HEK293 (cell line): ENCODE measurements at regions of chr2 and their contacts with region 1.

Region 1: DNA sequence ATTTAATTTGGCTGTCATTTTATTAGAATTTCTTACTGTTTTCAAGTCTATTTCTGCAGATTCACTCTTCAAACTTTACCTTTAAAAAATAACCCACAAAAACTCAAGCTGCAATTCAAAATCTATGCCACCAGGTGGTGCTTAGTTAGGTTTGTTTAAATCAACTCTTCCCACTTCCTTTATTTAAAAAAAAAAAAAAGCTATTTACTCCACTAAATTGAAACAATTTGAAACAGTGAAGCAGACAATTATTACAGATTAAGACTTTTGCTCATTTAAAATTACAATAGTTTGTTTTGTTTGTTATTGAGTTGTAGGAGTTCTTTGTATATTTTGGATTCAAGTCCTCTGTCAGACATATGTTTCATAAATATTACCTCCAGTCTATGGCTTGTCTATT is 300.0 kb downstream of the PDE11A start:
- H3K4me3 ChIP-seq: no peak overlapping the region
- H3K27ac ChIP-seq: no peak overlapping the region
- H3K4me1 ChIP-seq: no peaks in the 10 kb centered on the region
- CTCF ChIP-seq: no peak

Region 2: DNA sequence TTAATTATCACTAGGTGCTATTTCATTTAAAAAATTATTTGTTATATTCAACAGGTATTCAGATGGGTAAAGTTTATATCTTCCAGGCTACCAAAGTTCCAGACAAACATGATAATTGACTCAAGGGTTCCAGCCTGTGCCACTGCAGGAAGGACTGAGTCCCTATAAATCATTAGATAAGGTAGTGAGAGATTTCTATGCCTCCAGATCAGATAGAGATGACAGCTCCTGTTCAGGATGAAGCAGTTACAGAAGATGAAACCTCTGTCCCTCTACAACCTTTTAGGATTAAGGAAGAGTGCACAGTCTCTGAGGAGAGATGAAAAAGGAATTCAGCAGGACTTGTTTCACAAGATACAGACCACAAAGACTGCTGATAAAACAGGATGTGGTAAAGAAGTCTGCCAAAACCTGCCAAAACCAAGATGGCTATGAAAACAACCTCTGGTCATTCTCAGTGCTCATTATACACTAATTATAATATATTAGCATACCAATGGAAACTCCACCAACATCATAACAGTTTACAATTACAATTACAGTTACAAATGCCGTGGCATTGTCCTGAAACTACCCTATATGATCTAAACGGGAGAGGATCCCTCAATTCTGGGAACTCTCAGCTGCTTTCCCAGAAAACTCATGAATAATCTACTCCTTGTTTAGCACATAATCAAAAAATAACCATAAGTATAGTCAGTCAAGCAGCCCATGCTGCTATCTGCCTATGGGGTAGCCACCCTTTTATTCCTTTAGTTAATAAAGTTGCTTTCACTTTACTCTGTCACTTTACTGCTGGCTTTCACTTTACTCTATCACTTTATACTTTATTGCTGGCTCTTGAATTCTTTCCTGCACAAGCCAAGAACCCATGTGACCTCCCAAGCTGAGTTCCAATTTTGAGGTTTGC is 11.6 kb after region 1 on chr2:
- CTCF ChIA-PET with region 1: interaction called, 10 read pairs
- POLR2A ChIA-PET with region 1: no interaction called
- H3K4me3 ChIP-seq: no peak overlapping the region
- H3K27ac ChIP-seq: no peak overlapping the region
- H3K4me1 ChIP-seq: peaks cover 4% of the 10 kb centered on the region; the same call in 1 of the 2 replicates
- CTCF ChIP-seq: no peak